Activated CD4-positive, alpha-beta T cell treated with anti-CD3 and anti-CD28 coated beads for 36 hours (primary cell): ENCODE measurements at regions of chr1 and their contacts with region 1.

Region 1: GRCh38 chr1:110053557-110054428 is 16.7 kb downstream of the ALX3 start:
- DNase-seq: peak; percentile 83
- ATAC-seq: peak; percentile 88
- H3K4me3 Mint-ChIP-seq: no peak overlapping the region
- H3K27ac Mint-ChIP-seq: no peak overlapping the region
- H3K4me1 Mint-ChIP-seq: no peaks in the 10 kb centered on the region
- H3K27me3 Mint-ChIP-seq: no peaks in the 10 kb centered on the region

Region 2: GRCh38 chr1:110068646-110069403 is 15.0 kb after region 1 on chr1:
- CTCF ChIA-PET with region 1: interaction called, 18 read pairs
- POLR2A ChIA-PET with region 1: no interaction called
- intact Hi-C with region 1: no loop called
- DNase-seq: peak; percentile 49
- ATAC-seq: peak; percentile 34
- H3K4me3 Mint-ChIP-seq: peak overlapping the region; percentile 15
- H3K27ac Mint-ChIP-seq: no peak overlapping the region
- H3K4me1 Mint-ChIP-seq: peaks cover 17% of the 10 kb centered on the region
- H3K27me3 Mint-ChIP-seq: peaks cover 57% of the 10 kb centered on the region

Region 3: GRCh38 chr1:110106013-110106941 is 52.5 kb after region 1 on chr1:
- CTCF ChIA-PET with region 1: interaction called, 191 read pairs
- POLR2A ChIA-PET with region 1: no interaction called
- intact Hi-C with region 1: loop called (anchors 1 kb)
- DNase-seq: peak; percentile 78
- ATAC-seq: peak; percentile 98
- H3K4me3 Mint-ChIP-seq: no peak overlapping the region
- H3K27ac Mint-ChIP-seq: no peak overlapping the region
- H3K4me1 Mint-ChIP-seq: no peaks in the 10 kb centered on the region
- H3K27me3 Mint-ChIP-seq: peaks cover 6% of the 10 kb centered on the region

Region 4: GRCh38 chr1:110307239-110307974 is 253.6 kb after region 1 on chr1:
- CTCF ChIA-PET with region 1: no interaction called
- POLR2A ChIA-PET with region 1: no interaction called
- intact Hi-C with region 1: no loop called
- DNase-seq: no peak
- ATAC-seq: no peak
- H3K4me3 Mint-ChIP-seq: no peak overlapping the region
- H3K27ac Mint-ChIP-seq: no peak overlapping the region
- H3K4me1 Mint-ChIP-seq: no peaks in the 10 kb centered on the region
- H3K27me3 Mint-ChIP-seq: no peaks in the 10 kb centered on the region